H1 (cell line): ENCODE measurements at regions of chr4 and their contacts with region 1.

Region 1: GRCh38 chr4:78788005-78788889 is 12.1 kb downstream of the BMP2K start:
- DNase-seq: no peak
- H3K4me3 ChIP-seq: no peak overlapping the region
- H3K27ac ChIP-seq: no peak overlapping the region
- H3K4me1 ChIP-seq: peaks cover 0 to 3% (median 0%) of the 10 kb centered on the region in 4 experiments; a peak in 2 of 7 replicates
- H3K27me3 ChIP-seq: no peaks in the 10 kb centered on the region
- CTCF ChIP-seq: no peak
- EP300 ChIP-seq: no peak
- POLR2A ChIP-seq: no peak
- RAD21 ChIP-seq: no peak

Region 2: DNA sequence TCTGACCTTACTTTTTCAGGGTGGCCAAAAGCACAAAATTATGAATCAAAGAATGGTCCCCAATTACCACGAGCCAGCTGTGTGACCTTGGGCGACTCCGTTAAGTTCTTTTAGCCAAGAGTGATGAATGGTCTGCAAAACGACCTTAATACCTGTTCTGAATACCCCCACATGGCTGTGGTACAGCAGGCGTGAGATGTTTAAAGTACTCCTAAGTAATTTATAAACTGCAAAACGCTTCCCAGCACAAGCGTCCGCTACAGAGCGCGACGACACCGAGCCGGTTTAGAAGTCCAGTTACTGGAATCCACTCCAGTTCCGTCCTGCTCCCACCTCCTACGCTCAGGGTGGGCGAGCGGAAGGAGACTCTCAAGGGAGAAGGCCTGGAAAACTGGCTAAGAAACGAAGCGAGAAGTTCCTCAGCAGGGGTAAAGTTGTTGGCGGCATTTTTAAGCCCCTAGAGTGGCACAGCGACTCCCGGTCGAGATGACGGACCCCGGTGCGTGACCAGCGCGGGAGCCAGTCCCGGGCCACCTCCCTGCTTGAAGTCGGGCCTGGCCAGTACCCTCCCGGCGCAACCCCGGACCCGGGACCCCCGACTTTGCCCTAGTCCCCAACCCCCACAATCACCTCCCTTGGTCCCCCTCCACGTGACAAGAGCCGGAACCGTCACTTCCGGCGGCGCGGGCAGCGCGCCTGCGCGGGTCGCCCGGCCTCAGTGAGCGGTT is 12.8 kb before region 1 on chr4:
- CTCF ChIA-PET with region 1: interaction called, 3 read pairs
- POLR2A ChIA-PET with region 1: interaction called, 10 read pairs
- DNase-seq: peak; percentile 69 to 88
- H3K4me3 ChIP-seq: peak overlapping the region; percentile 76 to 82 (median 80)
- H3K27ac ChIP-seq: peak overlapping the region; percentile 98
- H3K4me1 ChIP-seq: peaks cover 0 to 2% (median 0%) of the 10 kb centered on the region in 4 experiments; a peak in 2 of 7 replicates
- H3K27me3 ChIP-seq: no peaks in the 10 kb centered on the region
- CTCF ChIP-seq: no peak
- EP300 ChIP-seq: peak in 1 of 2 experiments; percentile 67; a peak in 1 of 3 replicates
- POLR2A ChIP-seq: peak; percentile 86 to 98
- RAD21 ChIP-seq: no peak

Region 3: DNA sequence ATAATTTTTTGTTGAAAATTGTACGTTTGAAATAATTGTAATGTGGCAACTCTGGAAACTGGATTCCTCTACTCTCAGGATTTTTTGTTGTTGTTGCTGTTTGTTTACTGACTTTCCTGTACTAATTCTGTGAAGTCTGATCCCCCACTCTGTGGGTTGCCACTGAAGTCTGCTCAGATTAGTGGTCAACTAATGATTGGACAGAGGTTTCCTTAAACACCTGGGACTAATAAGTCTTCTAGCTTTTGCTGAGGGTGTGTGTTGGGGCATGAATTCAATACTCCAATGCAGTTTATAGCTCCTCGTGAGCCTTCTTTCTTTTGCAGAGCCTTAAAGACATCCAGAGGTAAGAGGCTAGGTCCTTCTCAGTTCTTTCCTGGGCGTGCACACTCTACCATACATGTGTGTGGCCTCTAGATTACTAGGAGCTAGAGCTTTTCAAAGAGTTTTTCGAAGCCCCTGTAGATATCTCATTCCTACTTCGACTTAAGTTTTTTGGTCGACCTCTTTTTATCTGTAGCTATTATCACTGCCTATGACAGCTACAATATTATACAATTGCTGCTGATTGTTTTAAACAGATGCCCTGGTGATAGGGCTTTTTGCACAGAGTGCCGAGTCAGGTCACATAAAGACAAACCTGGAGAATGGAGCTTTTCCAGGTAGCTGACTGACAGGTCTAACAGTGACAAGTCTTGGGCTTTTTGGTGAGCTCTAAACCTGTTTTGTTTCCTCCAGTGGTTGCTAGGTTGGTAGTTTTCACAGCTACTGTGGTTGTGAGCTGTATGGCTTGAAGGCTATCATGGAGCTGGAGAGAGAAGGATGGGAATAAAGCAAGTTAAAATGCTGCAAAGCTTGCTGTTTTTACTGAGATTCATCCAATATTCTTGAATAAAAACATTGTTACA is 21.9 kb after region 1 on chr4:
- CTCF ChIA-PET with region 1: no interaction called
- POLR2A ChIA-PET with region 1: no interaction called
- DNase-seq: no peak
- H3K4me3 ChIP-seq: no peak overlapping the region
- H3K27ac ChIP-seq: no peak overlapping the region
- H3K4me1 ChIP-seq: peaks cover 0 to 7% (median 3%) of the 10 kb centered on the region in 4 experiments; a peak in 2 of 7 replicates
- H3K27me3 ChIP-seq: no peaks in the 10 kb centered on the region
- CTCF ChIP-seq: no peak
- EP300 ChIP-seq: no peak
- POLR2A ChIP-seq: no peak
- RAD21 ChIP-seq: no peak